ENCODE measurements at regions of chr16 and their contacts with region 1.

Region 1: GRCh38 chr16:57091975-57092785 is at the start of gene CPNE2:
- DNase-seq: peak; percentile 56
- ATAC-seq: peak; percentile 55
- H3K4me3 Mint-ChIP-seq: peak within 1 kb of the TSS; percentile 68
- H3K27ac Mint-ChIP-seq: no peak within 1 kb of the TSS
- H3K4me1 Mint-ChIP-seq: peaks cover 5% of the 10 kb centered on the region
- H3K27me3 Mint-ChIP-seq: peaks cover 14% of the 10 kb centered on the region
- total RNA-seq, gene CPNE2: 4.9 to 7.3 TPM

Region 2: GRCh38 chr16:56950881-56951771 is 141.1 kb before region 1 on chr16:
- CTCF ChIA-PET with region 1: no interaction called
- POLR2A ChIA-PET with region 1: no interaction called
- intact Hi-C with region 1: no loop called
- DNase-seq: peak; percentile 85
- ATAC-seq: peak; percentile 94
- H3K4me3 Mint-ChIP-seq: no peak overlapping the region
- H3K27ac Mint-ChIP-seq: no peak overlapping the region
- H3K4me1 Mint-ChIP-seq: peaks cover 18% of the 10 kb centered on the region
- H3K27me3 Mint-ChIP-seq: no peaks in the 10 kb centered on the region

Region 3: DNA sequence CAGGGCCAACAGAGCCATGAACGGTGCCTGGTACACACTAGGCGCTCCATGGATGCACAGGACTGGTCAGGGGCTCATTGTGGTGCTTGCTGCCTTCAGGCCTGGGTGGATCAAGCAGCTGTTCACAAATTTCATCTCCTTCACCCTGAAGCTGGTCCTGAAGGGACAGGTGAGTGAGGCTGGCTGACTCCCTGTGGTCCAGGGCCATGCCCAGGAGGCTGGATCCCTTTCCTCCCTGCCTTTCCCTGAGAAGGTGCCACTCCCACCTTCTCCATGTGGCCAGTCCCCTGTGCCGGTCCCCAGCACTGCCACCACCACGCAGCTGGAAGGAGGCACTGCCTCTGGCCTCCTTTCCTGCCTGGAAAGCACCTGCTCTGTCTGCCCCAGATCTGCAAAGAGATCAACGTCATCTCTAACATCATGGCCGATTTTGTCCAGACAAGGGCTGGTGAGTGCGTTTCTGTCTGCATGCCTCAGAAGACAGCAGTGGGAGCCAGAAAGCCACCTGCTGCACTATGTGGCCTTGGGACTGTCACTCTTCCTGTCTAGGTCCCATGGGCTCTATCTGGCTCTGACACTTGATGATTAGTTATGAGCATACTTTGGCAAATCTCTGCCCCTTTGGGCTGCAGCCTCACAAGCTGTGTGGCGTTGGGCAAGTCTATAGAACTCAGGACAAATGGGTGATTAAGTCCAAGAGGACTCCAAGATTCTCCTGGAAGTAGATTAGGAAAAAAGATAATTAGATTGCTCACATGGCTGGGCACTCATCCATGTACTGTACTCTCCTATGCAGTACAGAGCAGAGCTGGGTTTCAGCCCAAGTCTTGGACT is 121.0 kb before region 1 on chr16:
- CTCF ChIA-PET with region 1: no interaction called
- POLR2A ChIA-PET with region 1: no interaction called
- intact Hi-C with region 1: no loop called
- DNase-seq: no peak
- ATAC-seq: no peak
- H3K4me3 Mint-ChIP-seq: no peak overlapping the region
- H3K27ac Mint-ChIP-seq: no peak overlapping the region
- H3K4me1 Mint-ChIP-seq: peaks cover 21% of the 10 kb centered on the region
- H3K27me3 Mint-ChIP-seq: no peaks in the 10 kb centered on the region

Region 4: DNA sequence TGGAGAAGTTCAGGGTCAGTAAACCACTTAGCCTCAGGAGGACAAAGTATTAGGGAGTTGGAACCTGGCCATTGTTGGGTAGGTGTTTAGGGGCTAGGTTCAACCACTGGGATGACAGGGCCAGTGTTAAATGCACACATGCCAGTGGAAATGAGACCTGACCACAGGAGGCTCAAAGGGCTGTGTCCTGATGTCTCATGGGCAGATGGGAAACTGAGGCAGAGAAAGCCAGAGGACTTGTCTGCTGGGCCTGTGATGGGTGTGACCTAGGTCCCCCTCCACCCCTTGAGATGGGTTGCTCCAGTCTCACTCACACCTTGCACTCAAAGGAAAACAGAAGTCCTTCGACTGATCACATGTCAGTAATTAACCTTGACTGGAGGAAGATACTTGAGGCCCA is 16.3 kb after region 1 on chr16:
- CTCF ChIA-PET with region 1: interaction called, 4 read pairs
- POLR2A ChIA-PET with region 1: no interaction called
- intact Hi-C with region 1: loop called in 1 of 2 experiments (anchors 2 kb)
- DNase-seq: no peak
- ATAC-seq: no peak
- H3K4me3 Mint-ChIP-seq: no peak overlapping the region
- H3K27ac Mint-ChIP-seq: no peak overlapping the region
- H3K4me1 Mint-ChIP-seq: peaks cover 12% of the 10 kb centered on the region
- H3K27me3 Mint-ChIP-seq: no peaks in the 10 kb centered on the region

Region 5: DNA sequence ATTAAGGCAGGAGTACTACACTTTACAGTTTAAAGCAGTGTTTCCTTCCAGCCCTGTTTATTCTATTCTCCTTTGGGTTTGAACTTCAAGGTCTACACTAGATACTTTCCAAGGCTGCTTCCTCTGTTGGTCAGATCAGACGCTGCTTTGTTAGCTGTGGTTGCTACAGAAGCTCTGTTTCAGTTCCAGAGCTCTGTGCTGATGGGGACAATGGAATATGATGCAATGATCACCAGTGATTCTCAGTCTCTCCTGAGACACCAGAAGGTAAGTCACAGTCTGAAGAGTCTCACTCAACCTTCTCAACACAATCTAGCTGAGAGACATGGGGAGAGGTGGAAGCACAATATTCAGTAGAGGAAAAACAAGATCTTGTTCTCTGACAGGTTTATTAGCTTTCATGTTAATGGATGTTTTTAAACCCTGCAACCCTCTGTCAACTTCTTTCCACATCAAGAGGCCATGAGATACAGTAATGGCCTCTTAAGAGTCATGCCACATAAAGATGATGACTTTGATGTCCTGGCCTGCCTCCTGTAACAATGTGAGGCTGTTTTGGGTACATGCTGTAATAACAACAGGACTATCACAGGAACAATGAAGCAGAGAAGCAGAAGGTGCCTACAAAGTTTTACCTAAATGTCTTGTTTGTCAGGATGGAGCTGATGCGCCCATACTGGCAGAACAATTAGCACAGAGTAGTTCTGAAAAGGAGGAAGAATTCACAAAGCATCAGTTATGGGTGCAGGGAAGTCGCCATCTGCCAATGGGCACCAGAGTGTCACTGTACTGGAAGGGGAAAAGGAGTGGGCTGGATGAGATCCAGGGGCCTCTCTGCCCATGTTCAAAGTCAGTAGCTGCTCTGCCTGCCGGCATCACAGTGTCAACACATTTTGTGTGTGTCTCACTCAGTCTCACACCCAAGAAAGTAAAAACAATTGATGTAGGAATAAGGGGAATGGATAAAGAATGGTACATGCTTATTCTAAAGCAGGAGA is 60.2 kb after region 1 on chr16:
- CTCF ChIA-PET with region 1: interaction called, 4 read pairs
- POLR2A ChIA-PET with region 1: interaction called, 8 read pairs
- intact Hi-C with region 1: loop called in 1 of 2 experiments (anchors 5 kb)
- DNase-seq: no peak
- ATAC-seq: peak; percentile 66
- H3K4me3 Mint-ChIP-seq: no peak overlapping the region
- H3K27ac Mint-ChIP-seq: peak overlapping the region; percentile 73
- H3K4me1 Mint-ChIP-seq: peaks cover 24% of the 10 kb centered on the region
- H3K27me3 Mint-ChIP-seq: no peaks in the 10 kb centered on the region

Region 6: GRCh38 chr16:57167953-57168352 is 75.8 kb after region 1 on chr16:
- CTCF ChIA-PET with region 1: interaction called, 5 read pairs
- POLR2A ChIA-PET with region 1: interaction called, 5 read pairs
- intact Hi-C with region 1: loop called in 1 of 2 experiments (anchors 1 kb)
- DNase-seq: no peak
- ATAC-seq: peak; percentile 88
- H3K4me3 Mint-ChIP-seq: no peak overlapping the region
- H3K27ac Mint-ChIP-seq: no peak overlapping the region
- H3K4me1 Mint-ChIP-seq: no peaks in the 10 kb centered on the region
- H3K27me3 Mint-ChIP-seq: no peaks in the 10 kb centered on the region

Region 7: DNA sequence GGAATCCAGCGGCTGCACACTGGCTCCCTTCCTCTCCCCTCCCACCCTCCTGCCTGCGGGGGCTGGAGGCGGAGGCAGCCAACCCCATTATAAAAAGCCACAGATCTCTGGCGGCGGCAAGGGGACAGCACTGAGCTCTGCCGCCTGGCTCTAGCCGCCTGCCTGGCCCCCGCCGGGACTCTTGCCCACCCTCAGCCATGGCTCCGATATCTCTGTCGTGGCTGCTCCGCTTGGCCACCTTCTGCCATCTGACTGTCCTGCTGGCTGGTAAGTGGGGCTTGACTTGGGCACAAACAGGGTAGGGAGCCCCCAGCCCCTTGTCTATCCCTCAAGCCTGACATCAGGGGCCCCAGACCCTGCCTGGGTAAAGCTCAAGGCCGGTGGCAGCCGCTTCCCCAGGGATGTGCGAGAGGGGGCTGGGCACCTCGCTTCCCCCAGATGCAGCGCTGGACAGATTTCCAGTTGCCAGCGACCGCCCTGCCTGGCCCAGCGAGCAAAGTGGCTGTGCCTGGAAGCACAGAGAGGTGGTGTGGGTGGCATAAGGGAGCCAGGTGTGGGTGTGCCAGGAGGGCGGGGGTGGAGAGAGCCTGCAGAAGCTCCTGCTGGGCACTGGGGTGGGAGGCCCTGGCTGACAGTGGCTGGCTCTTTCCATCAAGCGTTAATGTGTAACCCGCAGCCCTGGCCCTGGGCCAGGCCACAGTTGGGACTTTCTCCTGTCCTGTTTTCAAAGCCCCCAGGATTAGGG is 280.4 kb after region 1 on chr16 and contains the start of gene CX3CL1:
- CTCF ChIA-PET with region 1: no interaction called
- POLR2A ChIA-PET with region 1: no interaction called
- intact Hi-C with region 1: no loop called
- DNase-seq: no peak
- ATAC-seq: no peak
- H3K4me3 Mint-ChIP-seq: no peak within 1 kb of the TSS
- H3K27ac Mint-ChIP-seq: no peak within 1 kb of the TSS
- H3K4me1 Mint-ChIP-seq: peaks cover 11% of the 10 kb centered on the region
- H3K27me3 Mint-ChIP-seq: peaks cover 4% of the 10 kb centered on the region
- total RNA-seq, gene CX3CL1: not detected

Measured in activated CD4-positive, alpha-beta T cell treated with anti-CD3 and anti-CD28 coated beads for 36 hours (primary cell).